GM13976 (cell line): ENCODE measurements at regions of chr15 and their contacts with region 1.

Region 1: GRCh38 chr15:51971375-51972133 is at the start of gene LEO1:
- DNase-seq: peak; percentile 96
- CTCF ChIP-seq: peak; percentile 44

Region 2: GRCh38 chr15:51782357-51782896 is 189.1 kb before region 1 on chr15:
- in situ Hi-C with region 1: no loop called
- DNase-seq: peak; percentile 28
- CTCF ChIP-seq: no peak

Region 3: DNA sequence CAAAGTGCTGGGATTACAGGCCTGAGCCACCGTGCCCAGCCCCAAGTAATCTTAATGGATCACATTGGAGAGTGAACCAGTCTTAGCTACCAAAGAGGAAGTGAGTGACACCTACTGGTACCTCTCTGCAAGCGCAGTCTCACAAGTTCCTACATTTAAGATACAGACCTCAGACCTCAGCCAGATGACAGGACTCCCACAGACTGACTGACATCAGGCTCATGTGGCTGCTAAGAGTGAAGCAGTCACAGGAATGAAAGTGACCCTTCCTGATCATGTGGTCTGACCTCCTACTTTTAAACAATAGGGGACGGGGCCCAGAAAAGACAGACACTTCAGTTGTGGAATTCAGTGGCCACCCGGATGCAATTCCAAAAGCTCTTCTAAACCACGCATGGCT is 255.9 kb after region 1 on chr15:
- in situ Hi-C with region 1: loop called (anchors 10 kb)
- DNase-seq: peak; percentile 77
- CTCF ChIP-seq: peak; percentile 79